ENCODE measurements at regions of chr1 and their contacts with region 1.

Region 1: DNA sequence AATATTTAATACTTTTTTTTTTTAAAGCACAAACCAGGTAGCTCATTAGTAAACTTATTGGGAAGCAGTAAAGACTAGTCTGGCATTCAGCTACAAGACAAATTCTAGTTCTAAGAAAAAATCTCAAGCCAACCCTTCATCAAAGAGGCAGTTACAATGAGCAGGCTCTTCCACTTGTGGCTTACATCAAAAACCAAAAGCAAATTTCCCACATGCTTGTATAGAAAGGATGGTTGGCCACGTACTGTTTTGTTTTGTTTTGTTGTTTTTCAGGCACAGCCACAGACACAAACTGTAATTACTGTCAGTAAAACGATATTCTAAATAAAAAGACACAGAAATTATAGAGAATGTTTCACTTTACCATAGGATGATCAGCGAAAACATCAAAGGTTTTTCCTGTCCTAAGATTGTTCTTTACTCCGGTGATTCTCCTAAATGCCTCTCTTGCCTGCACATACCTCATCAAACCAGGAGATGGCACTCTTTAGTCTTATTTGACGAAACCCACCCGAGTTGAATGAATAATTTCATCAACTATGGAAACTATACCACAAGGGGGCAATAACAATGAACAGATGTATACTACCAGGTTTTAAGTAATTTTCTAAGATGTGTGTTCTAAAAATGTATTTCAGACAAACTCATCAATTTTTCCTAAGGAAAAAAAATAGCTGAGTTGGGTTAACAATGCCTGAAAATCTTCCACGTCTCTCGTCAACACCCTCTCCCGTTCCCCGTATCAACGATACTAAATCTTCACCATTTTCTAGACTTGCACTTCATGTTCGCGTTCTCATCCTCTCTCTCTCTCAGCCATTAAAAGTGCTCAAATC is 26.9 kb downstream of the RPL5 start:
- DNase-seq: peak; percentile 51
- H3K4me3 Mint-ChIP-seq: peak overlapping the region; percentile 32
- H3K27ac Mint-ChIP-seq: peak overlapping the region; percentile 19
- H3K4me1 Mint-ChIP-seq: peaks cover 27% of the 10 kb centered on the region
- H3K27me3 Mint-ChIP-seq: no peaks in the 10 kb centered on the region

Region 2: GRCh38 chr1:92877792-92878191 is 19.0 kb after region 1 on chr1:
- CTCF ChIA-PET with region 1: interaction called, 19 read pairs
- POLR2A ChIA-PET with region 1: interaction called, 4 read pairs
- DNase-seq: no peak
- H3K4me3 Mint-ChIP-seq: peak overlapping the region; percentile 5
- H3K27ac Mint-ChIP-seq: peak overlapping the region; percentile 64
- H3K4me1 Mint-ChIP-seq: peaks cover 28% of the 10 kb centered on the region
- H3K27me3 Mint-ChIP-seq: no peaks in the 10 kb centered on the region

Region 3: DNA sequence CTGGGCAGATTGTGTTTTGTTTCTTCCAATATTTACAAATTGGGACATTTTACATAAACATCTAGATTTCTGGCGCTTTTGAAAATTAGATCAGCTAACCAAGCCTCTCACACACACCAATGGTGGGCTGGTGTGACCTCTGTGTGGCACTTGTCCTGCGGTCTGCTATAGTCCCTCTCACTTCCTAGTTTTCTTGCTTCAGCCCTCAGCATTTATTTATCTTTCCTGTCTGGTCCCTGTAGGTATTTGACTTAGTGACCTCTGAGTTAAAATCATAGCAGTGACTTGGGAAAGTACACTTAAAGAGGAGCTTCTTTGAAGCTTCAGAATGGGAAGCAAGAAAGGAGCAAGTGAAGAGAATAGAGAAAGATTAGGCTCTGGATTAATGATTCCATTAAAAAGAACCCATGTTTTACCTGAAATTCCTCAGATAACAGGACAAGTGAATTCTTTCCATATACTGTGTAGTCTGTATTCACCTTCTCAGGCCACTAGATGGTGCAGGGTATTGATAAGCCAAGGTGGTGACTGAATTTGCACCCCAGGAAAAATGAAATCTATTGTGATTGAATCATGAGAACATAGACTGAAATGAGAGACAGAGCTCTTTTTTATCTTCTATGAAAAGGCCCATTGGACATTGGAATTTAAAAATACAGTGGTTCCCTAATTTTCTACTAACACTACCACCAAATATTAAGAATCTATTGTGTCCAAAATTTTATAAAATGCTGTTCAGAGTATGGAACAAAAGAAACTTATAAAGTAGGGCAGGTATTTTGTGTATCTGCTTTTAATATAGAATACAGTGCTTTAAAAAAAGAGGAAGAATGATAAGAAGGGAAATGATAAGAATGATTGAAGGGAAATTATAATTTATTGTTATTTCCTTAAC is 109.6 kb after region 1 on chr1:
- CTCF ChIA-PET with region 1: interaction called, 168 read pairs
- POLR2A ChIA-PET with region 1: interaction called, 65 read pairs
- DNase-seq: no peak
- H3K4me3 Mint-ChIP-seq: no peak overlapping the region
- H3K27ac Mint-ChIP-seq: no peak overlapping the region
- H3K4me1 Mint-ChIP-seq: peaks cover 31% of the 10 kb centered on the region
- H3K27me3 Mint-ChIP-seq: no peaks in the 10 kb centered on the region